ENCODE measurements at regions of chr1 and their contacts with region 1.

Region 1: DNA sequence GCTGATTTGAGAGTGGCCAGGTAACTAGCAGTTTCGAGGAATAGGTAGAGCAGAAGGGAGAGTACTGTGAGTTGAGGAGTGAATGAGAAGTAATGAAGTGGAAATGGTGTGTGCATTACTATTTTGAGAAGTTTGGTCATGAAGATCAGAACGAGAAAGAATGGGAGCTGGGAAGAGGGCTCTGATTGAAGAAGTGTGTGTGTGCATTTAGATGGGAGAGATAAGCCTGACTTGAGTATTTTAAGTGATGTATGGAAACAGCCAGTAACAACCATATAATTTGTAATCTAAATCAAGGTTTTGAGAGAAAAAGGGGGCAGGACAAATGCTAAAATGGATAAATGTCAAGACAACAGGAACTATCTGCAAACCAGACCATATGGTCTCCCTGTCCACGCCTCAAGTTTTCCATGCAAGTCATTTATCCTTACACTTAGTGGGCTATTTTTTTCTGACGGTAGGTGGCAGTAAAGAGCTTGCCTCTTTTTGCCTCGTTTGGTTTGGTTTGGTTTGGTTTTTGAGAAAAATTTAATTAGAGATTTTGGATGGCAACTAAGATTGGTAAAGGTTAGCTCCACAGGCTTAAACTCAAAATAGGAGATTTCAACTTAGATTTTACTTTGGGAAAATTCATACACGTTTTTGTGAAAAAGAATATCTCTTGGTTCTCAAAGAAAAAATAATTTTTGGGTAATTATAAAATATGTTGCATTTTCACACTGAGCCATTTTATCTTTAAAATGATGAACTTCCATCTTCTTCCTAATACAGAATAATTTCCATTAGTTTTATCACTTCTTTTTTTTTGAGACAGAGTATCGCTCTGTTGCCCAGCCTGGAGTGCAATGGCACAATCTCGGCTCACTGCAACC is 9.5 kb upstream of the B3GALNT2 start:
- DNase-seq: peak; percentile 32
- CTCF ChIP-seq: peak; percentile 73

Region 2: DNA sequence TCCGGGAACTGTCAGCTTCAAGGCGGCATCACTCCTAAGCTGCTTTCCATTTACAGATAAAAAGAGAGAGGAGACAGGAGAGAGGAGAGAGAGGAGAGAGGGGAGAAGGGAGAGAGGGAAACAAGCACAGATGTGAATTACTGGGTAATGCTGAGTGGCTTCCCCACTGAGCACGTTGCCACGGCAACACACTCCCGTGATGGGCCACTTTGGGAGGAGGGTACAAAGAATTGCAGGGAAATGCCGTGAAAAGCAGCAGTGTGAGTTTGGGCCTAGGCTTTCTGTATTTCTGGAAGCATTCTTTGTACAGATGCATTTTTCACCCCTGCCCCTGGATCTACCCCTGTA is 775.8 kb before region 1 on chr1:
- CTCF ChIA-PET with region 1: no interaction called
- POLR2A ChIA-PET with region 1: no interaction called
- DNase-seq: no peak
- CTCF ChIP-seq: no peak

Region 3: DNA sequence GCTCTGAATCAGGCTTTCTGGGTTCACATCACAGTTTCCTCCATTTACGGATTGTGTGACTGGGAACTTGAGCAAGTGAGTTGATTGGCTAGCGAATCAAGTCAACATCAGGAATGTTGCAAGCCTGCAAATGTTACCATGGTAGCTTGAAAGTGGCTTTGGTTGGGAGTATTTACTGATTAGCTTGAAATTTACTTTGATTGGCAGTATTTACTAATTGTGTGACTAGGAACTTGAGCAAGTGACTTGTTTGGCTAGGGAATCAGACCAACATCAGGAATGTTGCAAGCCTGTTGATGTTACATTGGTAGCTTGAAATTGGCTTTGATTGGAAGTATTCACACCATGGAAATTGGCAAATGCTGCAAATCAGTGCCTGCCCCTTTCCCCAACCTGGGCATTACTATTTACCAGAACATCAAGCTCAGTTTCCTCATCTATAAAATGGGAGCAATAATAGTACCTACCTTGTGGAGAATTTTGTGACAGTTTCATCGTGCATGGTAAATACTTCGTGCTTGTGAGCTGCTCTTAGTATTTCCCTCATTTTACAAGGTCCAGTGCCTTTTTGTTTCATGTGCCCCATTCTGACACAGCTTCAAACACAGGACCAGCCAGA is 13.6 kb after region 1 on chr1:
- CTCF ChIA-PET with region 1: interaction called, 22 read pairs
- POLR2A ChIA-PET with region 1: no interaction called
- DNase-seq: no peak
- CTCF ChIP-seq: no peak